Activated CD8-positive, alpha-beta memory T cell treated with anti-CD3 and anti-CD28 coated beads, Interleukin-2, amount 10 ng/mL, durations not matched to agents 7 days and 5 days (primary cell): ENCODE measurements at regions of chr15 and their contacts with region 1.

Region 1: GRCh38 chr15:90320061-90320884 is 31.8 kb upstream of the ZNF774 start:
- DNase-seq: peak; percentile 82
- ATAC-seq: peak; percentile 99
- H3K4me3 Mint-ChIP-seq: no peak overlapping the region
- H3K27ac Mint-ChIP-seq: peak overlapping the region; percentile 45
- H3K4me1 Mint-ChIP-seq: peaks cover 11% of the 10 kb centered on the region
- H3K27me3 Mint-ChIP-seq: no peaks in the 10 kb centered on the region

Region 2: DNA sequence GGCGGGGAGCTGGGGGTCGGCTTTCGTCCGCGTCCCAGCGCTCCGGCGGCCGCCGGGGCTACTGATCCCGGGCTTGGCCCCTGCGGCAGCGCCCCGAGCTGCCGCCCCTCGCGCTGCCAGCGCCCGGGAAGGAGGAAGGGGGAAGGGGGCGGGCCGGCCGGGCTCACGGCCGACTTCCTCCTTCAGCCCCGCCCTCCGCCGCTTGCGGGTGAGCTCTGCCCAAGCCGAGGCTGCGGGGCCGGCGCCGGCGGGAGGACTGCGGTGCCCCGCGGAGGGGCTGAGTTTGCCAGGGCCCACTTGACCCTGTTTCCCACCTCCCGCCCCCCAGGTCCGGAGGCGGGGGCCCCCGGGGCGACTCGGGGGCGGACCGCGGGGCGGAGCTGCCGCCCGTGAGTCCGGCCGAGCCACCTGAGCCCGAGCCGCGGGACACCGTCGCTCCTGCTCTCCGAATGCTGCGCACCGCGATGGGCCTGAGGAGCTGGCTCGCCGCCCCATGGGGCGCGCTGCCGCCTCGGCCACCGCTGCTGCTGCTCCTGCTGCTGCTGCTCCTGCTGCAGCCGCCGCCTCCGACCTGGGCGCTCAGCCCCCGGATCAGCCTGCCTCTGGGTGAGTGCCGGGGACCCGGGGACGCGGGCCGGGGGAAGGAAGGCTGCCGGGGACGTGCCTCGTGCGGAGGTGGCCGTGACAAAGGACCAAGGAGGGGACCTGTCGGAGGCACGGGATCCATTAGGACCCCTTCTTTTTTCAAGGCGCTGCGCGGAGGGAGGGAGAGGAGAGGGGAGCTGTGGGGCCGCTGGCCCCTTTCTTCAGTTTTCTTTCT is 118.9 kb before region 1 on chr15 and contains the start of gene SEMA4B:
- CTCF ChIA-PET with region 1: no interaction called
- DNase-seq: peak; percentile 81
- ATAC-seq: peak; percentile 95
- H3K4me3 Mint-ChIP-seq: peak within 1 kb of the TSS; percentile 76
- H3K27ac Mint-ChIP-seq: peak within 1 kb of the TSS; percentile 49
- H3K4me1 Mint-ChIP-seq: peaks cover 11% of the 10 kb centered on the region
- H3K27me3 Mint-ChIP-seq: peaks cover 5% of the 10 kb centered on the region
- total RNA-seq, gene SEMA4B: 6.0 to 13.8 TPM

Region 3: GRCh38 chr15:90300988-90301706 is 19.1 kb before region 1 on chr15:
- CTCF ChIA-PET with region 1: interaction called, 65 read pairs
- DNase-seq: peak; percentile 78
- ATAC-seq: peak; percentile 73
- H3K4me3 Mint-ChIP-seq: no peak overlapping the region
- H3K27ac Mint-ChIP-seq: no peak overlapping the region
- H3K4me1 Mint-ChIP-seq: peaks cover 31% of the 10 kb centered on the region
- H3K27me3 Mint-ChIP-seq: peaks cover 3% of the 10 kb centered on the region

Region 4: DNA sequence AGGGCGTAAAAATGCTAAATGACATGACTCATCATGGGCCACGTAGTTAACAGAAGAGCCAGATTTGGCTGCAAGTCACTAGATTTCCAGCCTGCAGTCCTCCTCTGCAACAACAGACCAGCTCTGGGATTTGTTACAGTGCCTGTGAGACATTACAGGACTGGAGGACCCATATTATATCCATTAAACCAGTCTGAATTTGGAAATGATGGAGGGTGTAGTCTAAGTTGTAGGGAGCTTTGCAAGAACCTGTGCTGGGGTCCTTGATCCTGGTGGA is 42.6 kb after region 1 on chr15:
- CTCF ChIA-PET with region 1: interaction called, 21 read pairs
- DNase-seq: no peak
- ATAC-seq: no peak
- H3K4me3 Mint-ChIP-seq: no peak overlapping the region
- H3K27ac Mint-ChIP-seq: peak overlapping the region; percentile 19
- H3K4me1 Mint-ChIP-seq: peaks cover 32% of the 10 kb centered on the region
- H3K27me3 Mint-ChIP-seq: peaks cover 2% of the 10 kb centered on the region

Region 5: DNA sequence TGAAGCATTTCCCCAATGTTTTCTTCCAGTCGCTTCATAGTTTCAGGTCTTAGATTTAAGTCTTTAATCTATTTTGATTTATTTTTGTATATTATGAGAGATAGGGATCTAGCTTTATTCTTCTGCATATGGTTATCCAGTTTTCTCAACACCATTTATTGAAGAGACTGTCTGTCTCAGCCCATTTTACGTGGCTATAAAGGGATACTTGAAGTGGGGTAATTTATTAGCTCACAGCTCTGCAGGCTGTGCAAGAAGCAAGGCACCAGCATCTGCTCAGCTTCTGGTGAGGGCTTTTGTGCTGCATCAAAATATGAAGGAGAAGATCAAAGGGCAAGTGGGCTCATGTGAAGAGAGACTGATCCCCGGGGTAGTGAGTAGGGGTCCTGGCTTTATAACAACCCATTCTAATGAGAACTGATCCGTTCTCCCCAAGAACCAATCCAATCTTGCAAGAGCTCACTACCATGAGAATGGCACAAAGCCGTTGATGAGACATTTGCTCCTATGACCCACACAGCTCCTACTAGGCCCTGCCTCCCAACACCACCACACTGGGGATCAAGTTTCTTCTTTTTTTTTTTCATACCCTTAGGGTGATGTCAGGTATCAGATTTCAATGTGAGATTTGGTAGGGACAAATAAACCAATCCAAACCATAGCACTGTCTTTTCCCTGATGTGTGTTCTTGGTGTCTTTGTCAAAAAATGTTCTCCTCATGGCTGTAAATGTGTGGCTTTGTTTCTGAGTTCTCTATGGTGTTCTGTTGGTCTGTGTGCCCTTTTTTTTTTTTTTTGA is 131.0 kb after region 1 on chr15:
- CTCF ChIA-PET with region 1: interaction called, 24 read pairs
- DNase-seq: no peak
- ATAC-seq: no peak
- H3K4me3 Mint-ChIP-seq: no peak overlapping the region
- H3K27ac Mint-ChIP-seq: no peak overlapping the region
- H3K4me1 Mint-ChIP-seq: peaks cover 5% of the 10 kb centered on the region
- H3K27me3 Mint-ChIP-seq: no peaks in the 10 kb centered on the region

Region 6: GRCh38 chr15:90501898-90502297 is 181.6 kb after region 1 on chr15:
- CTCF ChIA-PET with region 1: interaction called, 15 read pairs
- DNase-seq: no peak
- ATAC-seq: no peak
- H3K4me3 Mint-ChIP-seq: no peak overlapping the region
- H3K27ac Mint-ChIP-seq: peak overlapping the region; percentile 16
- H3K4me1 Mint-ChIP-seq: peaks cover 2% of the 10 kb centered on the region
- H3K27me3 Mint-ChIP-seq: no peaks in the 10 kb centered on the region

Region 7: GRCh38 chr15:90539789-90540188 is 219.5 kb after region 1 on chr15:
- CTCF ChIA-PET with region 1: interaction called, 10 read pairs
- DNase-seq: no peak
- ATAC-seq: peak; percentile 75
- H3K4me3 Mint-ChIP-seq: peak overlapping the region; percentile 79
- H3K27ac Mint-ChIP-seq: peak overlapping the region; percentile 96
- H3K4me1 Mint-ChIP-seq: peaks cover 53% of the 10 kb centered on the region
- H3K27me3 Mint-ChIP-seq: no peaks in the 10 kb centered on the region